PC-9 (cell line): ENCODE measurements at regions of chr11 and their contacts with region 1.

Region 1: DNA sequence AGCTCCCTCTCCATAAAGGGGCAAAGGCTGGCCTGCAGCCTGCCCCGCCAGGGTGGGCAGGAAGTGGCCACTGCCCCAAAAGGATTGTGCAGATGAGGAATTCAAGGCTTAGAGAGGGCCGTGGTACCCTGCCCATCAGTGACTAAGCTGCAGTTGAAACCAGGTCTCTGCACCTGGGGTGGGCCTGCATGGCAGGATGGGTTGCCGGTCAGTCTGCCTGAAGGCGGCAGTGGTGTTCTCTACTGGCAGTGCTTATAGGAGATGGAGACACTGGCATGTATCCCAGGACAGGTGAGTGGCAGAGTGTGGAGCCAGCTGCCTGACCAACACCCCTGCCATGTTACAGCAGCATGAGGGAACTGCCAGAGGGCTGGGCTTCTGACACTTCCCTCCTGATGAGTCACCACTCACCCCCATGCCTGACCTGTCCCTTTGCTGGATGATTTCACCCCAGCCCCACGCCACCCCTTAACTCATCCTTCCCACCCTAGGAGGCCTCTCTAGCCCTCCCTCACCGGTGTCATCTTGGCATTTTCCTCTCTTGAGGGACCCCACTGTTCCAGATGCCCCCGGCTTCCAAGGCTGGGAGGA is 70.2 kb upstream of the LMO1 start:
- DNase-seq: peak; percentile 78 to 83
- H3K4me3 ChIP-seq: no peak overlapping the region
- H3K27ac ChIP-seq: no peak overlapping the region
- H3K4me1 ChIP-seq: peaks cover 50% of the 10 kb centered on the region
- H3K27me3 ChIP-seq: no peaks in the 10 kb centered on the region
- CTCF ChIP-seq: peak; percentile 52

Region 2: DNA sequence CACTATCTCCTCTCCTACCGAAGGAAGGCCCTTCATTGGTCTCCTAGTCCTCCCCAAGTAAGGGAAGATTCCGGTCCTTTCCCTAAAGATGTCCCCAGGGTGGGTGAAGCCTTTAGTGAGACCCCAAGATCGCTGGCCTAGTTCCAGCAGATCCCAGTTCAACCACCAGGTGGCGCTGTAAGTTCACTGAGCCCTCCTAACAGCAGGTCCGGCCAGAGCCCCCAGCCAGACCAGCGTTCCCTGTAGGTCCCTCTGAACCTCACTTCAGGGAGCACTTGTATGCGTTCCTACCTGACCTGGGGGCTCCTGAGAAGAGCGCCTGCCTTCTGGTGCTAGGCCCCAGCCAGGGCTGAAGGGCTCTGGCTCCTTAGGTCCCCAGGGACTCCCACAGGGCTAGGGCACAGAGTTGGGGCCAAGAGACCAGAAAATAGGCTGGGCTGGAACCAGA is 108.3 kb before region 1 on chr11:
- CTCF ChIA-PET with region 1: no interaction called
- POLR2A ChIA-PET with region 1: no interaction called
- intact Hi-C with region 1: loop called (anchors 5 kb)
- DNase-seq: peak; percentile 41 to 57
- H3K4me3 ChIP-seq: no peak overlapping the region
- H3K27ac ChIP-seq: no peak overlapping the region
- H3K4me1 ChIP-seq: peaks cover 19% of the 10 kb centered on the region; the same call in 1 of the 2 replicates
- H3K27me3 ChIP-seq: no peaks in the 10 kb centered on the region
- CTCF ChIP-seq: peak; percentile 92

Region 3: GRCh38 chr11:8354622-8355415 is 20.9 kb after region 1 on chr11:
- CTCF ChIA-PET with region 1: interaction called, 6 read pairs
- POLR2A ChIA-PET with region 1: no interaction called
- intact Hi-C with region 1: loop called (anchors 2 kb)
- DNase-seq: peak in 1 of 2 experiments; percentile 26
- H3K4me3 ChIP-seq: peak overlapping the region; percentile 39; the same call in 1 of the 2 replicates
- H3K27ac ChIP-seq: no peak overlapping the region
- H3K4me1 ChIP-seq: peaks cover 15% of the 10 kb centered on the region
- H3K27me3 ChIP-seq: no peaks in the 10 kb centered on the region
- CTCF ChIP-seq: no peak

Region 4: GRCh38 chr11:8794677-8795103 is 460.8 kb after region 1 on chr11:
- CTCF ChIA-PET with region 1: no interaction called
- POLR2A ChIA-PET with region 1: no interaction called
- intact Hi-C with region 1: no loop called
- DNase-seq: no peak
- H3K4me3 ChIP-seq: no peak overlapping the region
- H3K27ac ChIP-seq: no peak overlapping the region
- H3K4me1 ChIP-seq: no peaks in the 10 kb centered on the region
- H3K27me3 ChIP-seq: no peaks in the 10 kb centered on the region
- CTCF ChIP-seq: peak; percentile 27; the same call in 1 of the 2 replicates